Activated CD4-positive, alpha-beta memory T cell treated with anti-CD3 and anti-CD28 coated beads for 36 hours (primary cell): ENCODE measurements at regions of chr5 and their contacts with region 1.

Region 1: GRCh38 chr5:35815089-35815936 is 41.4 kb upstream of the IL7R start:
- DNase-seq: peak; percentile 71
- H3K4me3 Mint-ChIP-seq: no peak overlapping the region
- H3K27ac Mint-ChIP-seq: no peak overlapping the region
- H3K4me1 Mint-ChIP-seq: peaks cover 52% of the 10 kb centered on the region
- H3K27me3 Mint-ChIP-seq: no peaks in the 10 kb centered on the region

Region 2: GRCh38 chr5:35285011-35285410 is 530.3 kb before region 1 on chr5:
- CTCF ChIA-PET with region 1: no interaction called
- POLR2A ChIA-PET with region 1: no interaction called
- intact Hi-C with region 1: no loop called
- DNase-seq: no peak
- H3K4me3 Mint-ChIP-seq: no peak overlapping the region
- H3K27ac Mint-ChIP-seq: no peak overlapping the region
- H3K4me1 Mint-ChIP-seq: no peaks in the 10 kb centered on the region
- H3K27me3 Mint-ChIP-seq: no peaks in the 10 kb centered on the region

Region 3: DNA sequence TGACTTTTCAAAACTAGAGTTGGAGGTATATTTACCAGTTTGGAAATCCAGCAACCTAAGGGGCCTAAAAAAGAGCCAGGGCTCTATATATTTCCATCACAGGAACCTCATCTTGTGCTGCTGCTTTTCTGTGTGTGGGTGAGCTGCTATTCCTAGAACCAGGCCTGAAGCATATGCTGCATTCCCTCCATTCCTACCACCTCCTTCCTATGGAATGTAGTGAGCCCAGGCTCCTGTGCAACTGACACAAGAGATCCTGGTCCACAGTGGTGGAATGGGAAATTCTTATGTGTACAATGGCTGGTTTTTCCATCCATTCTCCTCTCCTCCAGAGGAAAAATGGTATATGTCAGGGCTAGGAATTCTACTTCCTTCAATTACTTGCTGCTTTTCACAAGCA is 158.6 kb before region 1 on chr5:
- CTCF ChIA-PET with region 1: no interaction called
- POLR2A ChIA-PET with region 1: no interaction called
- intact Hi-C with region 1: no loop called
- DNase-seq: no peak
- H3K4me3 Mint-ChIP-seq: no peak overlapping the region
- H3K27ac Mint-ChIP-seq: no peak overlapping the region
- H3K4me1 Mint-ChIP-seq: peaks cover 21% of the 10 kb centered on the region
- H3K27me3 Mint-ChIP-seq: no peaks in the 10 kb centered on the region

Region 4: DNA sequence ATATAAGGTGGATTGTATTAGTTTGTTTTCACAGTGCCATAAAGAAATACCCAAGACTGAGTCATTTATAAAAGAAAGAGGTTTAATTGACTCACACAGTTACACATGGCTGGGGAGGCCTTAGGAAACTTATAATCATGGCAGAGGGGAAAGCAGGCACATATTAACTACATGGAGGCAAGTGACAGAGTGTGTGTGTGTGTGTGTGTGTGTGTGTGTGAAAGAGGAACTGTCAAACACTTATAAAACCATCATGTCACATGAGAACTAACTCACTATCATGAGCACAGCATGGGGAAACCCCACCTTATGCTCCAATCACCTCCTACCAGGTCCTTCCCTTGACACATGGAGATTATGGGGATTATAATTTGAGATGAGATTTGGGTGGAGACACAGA is 79.0 kb before region 1 on chr5:
- CTCF ChIA-PET with region 1: no interaction called
- POLR2A ChIA-PET with region 1: no interaction called
- intact Hi-C with region 1: loop called (anchors 5 kb)
- DNase-seq: peak; percentile 68
- H3K4me3 Mint-ChIP-seq: no peak overlapping the region
- H3K27ac Mint-ChIP-seq: peak overlapping the region; percentile 77
- H3K4me1 Mint-ChIP-seq: peaks cover 47% of the 10 kb centered on the region
- H3K27me3 Mint-ChIP-seq: no peaks in the 10 kb centered on the region

Region 5: DNA sequence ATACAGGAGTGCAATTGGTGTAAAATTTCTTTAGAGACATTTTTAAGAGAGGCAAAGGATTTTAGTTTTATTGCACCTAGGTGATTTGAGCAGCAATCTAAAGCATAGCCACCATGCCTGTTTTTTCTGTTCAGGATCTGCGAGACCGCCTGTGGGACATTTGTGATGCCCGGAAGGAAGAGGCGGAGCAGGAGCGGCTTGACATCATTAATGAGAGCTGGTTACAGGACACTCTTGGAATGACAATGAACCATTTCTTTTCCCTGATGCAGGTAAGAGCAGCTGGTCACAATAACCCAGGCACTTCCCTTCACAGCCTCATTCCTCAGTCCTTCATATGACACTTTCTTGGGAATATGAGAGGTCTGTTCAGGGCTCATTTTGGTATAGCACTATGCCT is 61.8 kb before region 1 on chr5:
- CTCF ChIA-PET with region 1: no interaction called
- POLR2A ChIA-PET with region 1: no interaction called
- intact Hi-C with region 1: no loop called
- DNase-seq: no peak
- H3K4me3 Mint-ChIP-seq: no peak overlapping the region
- H3K27ac Mint-ChIP-seq: no peak overlapping the region
- H3K4me1 Mint-ChIP-seq: peaks cover 17% of the 10 kb centered on the region
- H3K27me3 Mint-ChIP-seq: no peaks in the 10 kb centered on the region

Region 6: GRCh38 chr5:35785601-35786085 is 29.7 kb before region 1 on chr5:
- CTCF ChIA-PET with region 1: interaction called, 59 read pairs
- POLR2A ChIA-PET with region 1: interaction called, 12 read pairs
- intact Hi-C with region 1: loop called (anchors 2 kb)
- DNase-seq: peak; percentile 71
- H3K4me3 Mint-ChIP-seq: peak overlapping the region; percentile 17
- H3K27ac Mint-ChIP-seq: peak overlapping the region; percentile 89
- H3K4me1 Mint-ChIP-seq: peaks cover 85% of the 10 kb centered on the region
- H3K27me3 Mint-ChIP-seq: no peaks in the 10 kb centered on the region

Region 7: GRCh38 chr5:35794684-35795375 is 20.5 kb before region 1 on chr5:
- CTCF ChIA-PET with region 1: interaction called, 6 read pairs
- POLR2A ChIA-PET with region 1: interaction called, 33 read pairs
- intact Hi-C with region 1: loop called (anchors 1 kb)
- DNase-seq: no peak
- H3K4me3 Mint-ChIP-seq: peak overlapping the region; percentile 31
- H3K27ac Mint-ChIP-seq: peak overlapping the region; percentile 89
- H3K4me1 Mint-ChIP-seq: peaks cover 86% of the 10 kb centered on the region
- H3K27me3 Mint-ChIP-seq: no peaks in the 10 kb centered on the region

Region 8: DNA sequence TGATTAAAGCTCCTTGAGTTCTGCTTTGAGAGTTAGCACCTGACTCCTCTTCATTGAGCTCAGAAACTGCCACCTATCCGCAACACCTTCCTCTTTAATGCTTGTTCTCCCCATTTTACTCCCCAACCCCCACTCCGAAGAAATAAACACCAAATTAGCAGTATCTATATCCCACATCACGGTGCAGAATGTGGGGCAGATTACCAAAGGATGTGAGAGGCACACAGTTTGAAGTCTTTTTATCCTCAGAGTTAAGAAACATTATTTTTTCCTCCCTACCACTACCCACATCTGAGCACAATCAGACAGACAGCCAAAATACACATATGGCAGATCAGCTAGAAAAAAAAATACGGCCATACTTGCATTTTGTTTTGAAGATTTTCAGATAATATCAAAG is 15.3 kb after region 1 on chr5:
- CTCF ChIA-PET with region 1: interaction called, 6 read pairs
- POLR2A ChIA-PET with region 1: interaction called, 48 read pairs
- intact Hi-C with region 1: loop called (anchors 1 kb)
- DNase-seq: no peak
- H3K4me3 Mint-ChIP-seq: peak overlapping the region; percentile 27
- H3K27ac Mint-ChIP-seq: peak overlapping the region; percentile 96
- H3K4me1 Mint-ChIP-seq: peaks cover 94% of the 10 kb centered on the region
- H3K27me3 Mint-ChIP-seq: no peaks in the 10 kb centered on the region

Region 9: GRCh38 chr5:35838370-35839042 is 23.2 kb after region 1 on chr5:
- CTCF ChIA-PET with region 1: interaction called, 6 read pairs
- POLR2A ChIA-PET with region 1: interaction called, 48 read pairs
- intact Hi-C with region 1: loop called (anchors 1 kb)
- DNase-seq: peak; percentile 76
- H3K4me3 Mint-ChIP-seq: peak overlapping the region; percentile 50
- H3K27ac Mint-ChIP-seq: peak overlapping the region; percentile 96
- H3K4me1 Mint-ChIP-seq: peaks cover 70% of the 10 kb centered on the region
- H3K27me3 Mint-ChIP-seq: no peaks in the 10 kb centered on the region